SK-N-SH (cell line): ENCODE measurements at regions of chr5 and their contacts with region 1.

Region 1: DNA sequence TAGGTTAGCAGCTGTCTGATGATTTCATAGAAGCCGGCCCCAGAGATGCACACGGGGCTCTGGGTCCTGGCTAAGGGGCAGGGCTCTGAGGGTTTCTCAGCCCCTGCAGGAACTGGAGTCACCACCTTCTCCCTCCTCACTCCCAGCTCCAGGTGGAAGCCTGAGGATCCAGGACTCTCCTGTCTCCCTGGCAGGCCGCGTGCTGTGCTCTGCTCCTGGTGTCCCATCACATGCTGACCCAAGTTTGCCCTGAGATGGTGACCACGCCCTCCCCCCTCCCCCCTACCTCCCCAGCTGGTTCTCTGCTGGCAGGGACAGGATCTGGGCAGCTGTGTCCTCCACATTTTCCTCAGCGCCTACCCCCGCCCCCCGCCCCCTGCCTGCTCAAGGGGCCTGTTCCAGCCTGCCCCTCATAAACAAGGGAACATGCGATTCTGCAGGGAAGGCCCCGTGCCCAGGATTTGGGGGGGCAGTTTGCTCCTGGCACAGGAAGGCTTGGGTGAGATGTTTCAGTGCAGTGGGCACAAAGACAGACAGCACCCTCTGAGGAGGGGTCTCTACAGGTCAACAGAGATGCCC is 87.4 kb downstream of the PSD2 start:
- DNase-seq: peak; percentile 55
- H3K4me3 ChIP-seq: no peak overlapping the region
- H3K27ac ChIP-seq: peak overlapping the region in 1 of 2 experiments; percentile 44; a peak in 1 of 4 replicates
- H3K4me1 ChIP-seq: peaks cover 0 to 47% of the 10 kb centered on the region in 2 experiments; a peak in 1 of 4 replicates
- H3K27me3 ChIP-seq: no peaks in the 10 kb centered on the region
- CTCF ChIP-seq: no peak
- EP300 ChIP-seq: no peak
- RAD21 ChIP-seq: no peak

Region 2: DNA sequence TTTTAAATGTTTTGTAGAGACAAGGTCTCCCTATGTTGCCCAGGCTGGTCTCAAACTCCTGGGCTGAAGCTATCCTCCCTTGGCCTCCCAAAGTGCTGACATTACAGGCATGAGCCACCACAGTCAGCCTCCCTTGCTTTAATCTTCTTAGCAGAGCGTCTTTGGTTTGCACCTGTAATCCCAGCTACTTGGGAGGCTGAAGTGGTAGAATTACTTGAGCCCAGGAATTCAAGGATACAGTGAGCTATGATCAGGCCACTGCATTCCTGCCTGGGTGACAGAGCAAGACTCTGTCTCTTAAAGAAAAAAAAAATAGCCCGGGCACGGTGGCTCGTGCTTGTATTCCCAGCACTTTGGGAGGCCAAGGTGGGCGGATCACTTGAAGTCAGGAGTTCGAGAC is 294.1 kb before region 1 on chr5:
- CTCF ChIA-PET with region 1: no interaction called
- POLR2A ChIA-PET with region 1: no interaction called
- DNase-seq: no peak
- H3K4me3 ChIP-seq: no peak overlapping the region
- H3K27ac ChIP-seq: no peak overlapping the region
- H3K4me1 ChIP-seq: no peaks in the 10 kb centered on the region
- H3K27me3 ChIP-seq: no peaks in the 10 kb centered on the region
- CTCF ChIP-seq: no peak
- EP300 ChIP-seq: no peak
- RAD21 ChIP-seq: no peak

Region 3: GRCh38 chr5:139895647-139896046 is 12.6 kb after region 1 on chr5:
- CTCF ChIA-PET with region 1: interaction called, 22 read pairs
- POLR2A ChIA-PET with region 1: no interaction called
- DNase-seq: no peak
- H3K4me3 ChIP-seq: no peak overlapping the region
- H3K27ac ChIP-seq: peak overlapping the region in 1 of 2 experiments; percentile 97; a peak in 2 of 4 replicates
- H3K4me1 ChIP-seq: peaks cover 0 to 65% of the 10 kb centered on the region in 2 experiments; a peak in 2 of 4 replicates
- H3K27me3 ChIP-seq: no peaks in the 10 kb centered on the region
- CTCF ChIP-seq: no peak
- EP300 ChIP-seq: peak in 1 of 2 experiments; percentile 38; a peak in 1 of 4 replicates
- RAD21 ChIP-seq: no peak

Region 4: GRCh38 chr5:139924294-139925215 is 41.5 kb after region 1 on chr5:
- CTCF ChIA-PET with region 1: no interaction called
- POLR2A ChIA-PET with region 1: no interaction called
- DNase-seq: no peak
- H3K4me3 ChIP-seq: no peak overlapping the region
- H3K27ac ChIP-seq: no peak overlapping the region
- H3K4me1 ChIP-seq: peaks cover 0 to 16% of the 10 kb centered on the region in 2 experiments; a peak in 1 of 4 replicates
- H3K27me3 ChIP-seq: no peaks in the 10 kb centered on the region
- CTCF ChIP-seq: no peak
- EP300 ChIP-seq: no peak
- RAD21 ChIP-seq: no peak